Calu3 (cell line): ENCODE measurements at regions of chr2 and their contacts with region 1.

Region 1: GRCh38 chr2:20635675-20636584 is 15.0 kb downstream of the HS1BP3 start:
- DNase-seq: peak; percentile 93
- H3K4me3 Mint-ChIP-seq: peak overlapping the region; percentile 29
- H3K27ac Mint-ChIP-seq: peak overlapping the region; percentile 49
- H3K4me1 Mint-ChIP-seq: peaks cover 29% of the 10 kb centered on the region
- H3K27me3 Mint-ChIP-seq: no peaks in the 10 kb centered on the region
- CTCF ChIP-seq: peak; percentile 92

Region 2: DNA sequence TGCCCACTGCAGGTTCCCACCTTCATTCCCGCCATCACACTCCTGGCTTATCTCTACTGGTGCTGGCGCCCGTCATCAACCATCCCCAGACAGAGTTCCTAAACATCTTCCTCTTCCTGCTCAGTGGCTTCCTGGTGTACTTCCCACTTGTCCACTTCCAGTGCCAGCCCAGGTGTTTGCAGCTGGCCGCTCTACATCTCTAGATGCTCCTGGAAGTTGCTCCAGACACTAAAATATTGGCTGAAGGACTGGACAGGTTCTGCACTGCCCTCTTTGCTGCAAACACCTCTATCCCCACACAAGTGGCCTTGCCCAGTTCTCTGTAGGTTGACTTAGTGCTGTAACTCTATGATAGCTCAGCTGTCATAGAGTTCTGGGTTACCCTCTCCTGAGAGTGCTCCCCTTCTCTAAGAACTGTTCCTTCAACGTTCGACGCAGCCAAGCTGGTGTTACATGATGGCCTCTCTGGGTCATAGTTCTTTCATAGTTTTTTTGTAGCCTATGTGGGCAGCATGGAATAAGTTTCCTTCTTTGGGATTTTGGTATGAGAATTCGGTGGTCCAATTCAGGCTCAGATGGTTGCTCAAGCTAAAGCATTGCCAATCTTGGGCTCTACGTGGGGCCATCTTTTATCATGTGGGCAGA is 239.5 kb before region 1 on chr2:
- CTCF ChIA-PET with region 1: interaction called, 16 read pairs
- intact Hi-C with region 1: loop called (anchors 2 kb)
- DNase-seq: no peak
- H3K4me3 Mint-ChIP-seq: no peak overlapping the region
- H3K27ac Mint-ChIP-seq: no peak overlapping the region
- H3K4me1 Mint-ChIP-seq: peaks cover 10% of the 10 kb centered on the region
- H3K27me3 Mint-ChIP-seq: peaks cover 39% of the 10 kb centered on the region
- CTCF ChIP-seq: no peak

Region 3: GRCh38 chr2:20438334-20439192 is 197.4 kb before region 1 on chr2:
- CTCF ChIA-PET with region 1: interaction called, 50 read pairs
- intact Hi-C with region 1: loop called (anchors 1 kb)
- DNase-seq: peak; percentile 49
- H3K4me3 Mint-ChIP-seq: peak overlapping the region; percentile 35
- H3K27ac Mint-ChIP-seq: peak overlapping the region; percentile 55
- H3K4me1 Mint-ChIP-seq: peaks cover 18% of the 10 kb centered on the region
- H3K27me3 Mint-ChIP-seq: no peaks in the 10 kb centered on the region
- CTCF ChIP-seq: no peak

Region 4: GRCh38 chr2:20466417-20466911 is 169.5 kb before region 1 on chr2:
- CTCF ChIA-PET with region 1: no interaction called
- intact Hi-C with region 1: no loop called
- DNase-seq: no peak
- H3K4me3 Mint-ChIP-seq: no peak overlapping the region
- H3K27ac Mint-ChIP-seq: no peak overlapping the region
- H3K4me1 Mint-ChIP-seq: no peaks in the 10 kb centered on the region
- H3K27me3 Mint-ChIP-seq: no peaks in the 10 kb centered on the region
- CTCF ChIP-seq: no peak

Region 5: GRCh38 chr2:20516646-20517341 is 119.1 kb before region 1 on chr2:
- CTCF ChIA-PET with region 1: interaction called, 4 read pairs
- intact Hi-C with region 1: loop called (anchors 2 kb)
- DNase-seq: peak; percentile 72
- H3K4me3 Mint-ChIP-seq: peak overlapping the region; percentile 12
- H3K27ac Mint-ChIP-seq: peak overlapping the region; percentile 99
- H3K4me1 Mint-ChIP-seq: peaks cover 56% of the 10 kb centered on the region
- H3K27me3 Mint-ChIP-seq: no peaks in the 10 kb centered on the region
- CTCF ChIP-seq: no peak

Region 6: DNA sequence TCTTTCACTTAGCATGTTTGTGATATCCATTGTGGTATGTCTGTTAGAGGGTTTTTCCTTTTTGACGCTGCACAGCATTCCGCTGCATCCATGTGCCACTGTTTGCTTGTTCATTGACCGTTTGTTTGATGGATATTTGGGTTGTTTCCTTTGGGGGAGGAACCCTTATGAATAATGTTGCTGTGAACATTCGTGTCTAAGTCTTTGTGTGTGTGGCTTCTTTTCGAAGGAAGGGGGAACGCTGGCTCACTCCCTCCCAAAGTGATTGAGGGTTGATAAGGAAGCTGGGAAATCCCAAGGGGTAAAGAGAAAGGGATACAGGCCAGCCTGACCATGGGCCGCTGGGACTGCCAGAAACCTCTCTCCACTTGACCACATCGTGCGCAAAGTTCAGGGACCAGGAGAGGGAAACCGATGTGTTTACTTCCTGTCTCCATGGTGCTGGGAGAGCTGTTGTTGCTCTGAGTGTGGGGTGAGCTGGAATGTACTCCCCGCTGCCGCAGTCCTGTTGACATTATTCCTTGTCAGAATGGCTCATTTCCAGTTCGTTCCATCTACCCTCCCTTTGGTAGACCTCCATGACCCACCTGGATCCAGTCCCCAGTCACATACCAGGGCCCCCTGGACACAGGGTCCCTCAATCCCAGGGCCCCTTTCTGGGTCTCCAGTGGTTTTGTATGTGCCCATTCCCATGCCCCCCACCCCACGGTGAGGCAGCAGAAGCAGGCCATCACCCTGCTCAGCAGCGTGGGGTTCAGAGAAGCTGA is 24.7 kb before region 1 on chr2:
- CTCF ChIA-PET with region 1: interaction called, 12 read pairs
- intact Hi-C with region 1: loop called (anchors 1 kb)
- DNase-seq: peak; percentile 81
- H3K4me3 Mint-ChIP-seq: no peak overlapping the region
- H3K27ac Mint-ChIP-seq: peak overlapping the region; percentile 62
- H3K4me1 Mint-ChIP-seq: peaks cover 43% of the 10 kb centered on the region
- H3K27me3 Mint-ChIP-seq: no peaks in the 10 kb centered on the region
- CTCF ChIP-seq: no peak